Endothelial cell of umbilical vein (primary cell): ENCODE measurements at regions of chr6 and their contacts with region 1.

Region 1: DNA sequence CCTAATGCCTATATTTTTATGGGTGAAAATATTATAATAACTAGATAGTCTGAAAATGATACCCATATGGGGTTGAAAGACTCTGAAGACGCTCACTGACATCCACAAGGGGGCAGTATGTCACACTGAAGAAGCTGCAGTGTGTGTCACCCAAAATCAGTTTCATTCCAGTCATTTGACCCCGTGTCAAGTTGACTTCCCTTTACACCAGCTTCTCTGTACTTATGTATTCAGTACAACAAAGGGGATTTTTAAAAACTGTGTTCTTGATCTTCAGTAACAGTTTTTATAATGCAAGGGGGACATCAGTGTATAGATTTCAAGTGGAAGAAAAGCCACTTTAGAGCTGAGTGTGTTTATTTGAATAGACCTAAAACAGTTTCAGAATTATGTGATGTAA is 19.3 kb downstream of the FAXC start:
- DNase-seq: peak; percentile 57
- H3K4me3 ChIP-seq: no peak overlapping the region
- H3K27ac ChIP-seq: no peak overlapping the region
- H3K4me1 ChIP-seq: no peaks in the 10 kb centered on the region
- H3K27me3 ChIP-seq: peaks cover 0 to 2% of the 10 kb centered on the region in 2 experiments
- CTCF ChIP-seq: peak; percentile 74 to 81
- POLR2A ChIP-seq: no peak

Region 2: DNA sequence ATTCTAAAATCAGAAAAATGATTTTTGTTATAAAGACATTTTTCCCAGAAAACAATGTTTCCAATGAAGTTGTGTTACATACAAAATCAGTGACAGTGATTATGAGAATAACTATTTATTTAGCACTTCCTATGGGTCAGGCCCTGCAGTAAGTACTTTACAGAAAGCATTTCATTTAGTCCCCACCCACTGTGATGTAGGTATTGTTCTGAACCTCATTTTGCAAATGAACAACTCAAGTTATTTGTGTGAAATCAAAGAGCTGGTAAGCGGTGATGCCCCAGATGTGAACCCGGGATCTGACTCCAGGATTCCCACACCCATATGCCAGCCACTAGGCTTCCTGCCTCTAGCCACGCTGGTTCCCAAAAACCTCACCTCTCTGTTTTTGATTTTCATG is 11.6 kb before region 1 on chr6:
- CTCF ChIA-PET with region 1: interaction called, 41 read pairs
- POLR2A ChIA-PET with region 1: no interaction called
- dilution Hi-C with region 1: no loop called
- intact Hi-C with region 1: no loop called
- DNase-seq: no peak
- H3K4me3 ChIP-seq: no peak overlapping the region
- H3K27ac ChIP-seq: no peak overlapping the region
- H3K4me1 ChIP-seq: no peaks in the 10 kb centered on the region
- H3K27me3 ChIP-seq: no peaks in the 10 kb centered on the region
- CTCF ChIP-seq: no peak
- POLR2A ChIP-seq: no peak

Region 3: DNA sequence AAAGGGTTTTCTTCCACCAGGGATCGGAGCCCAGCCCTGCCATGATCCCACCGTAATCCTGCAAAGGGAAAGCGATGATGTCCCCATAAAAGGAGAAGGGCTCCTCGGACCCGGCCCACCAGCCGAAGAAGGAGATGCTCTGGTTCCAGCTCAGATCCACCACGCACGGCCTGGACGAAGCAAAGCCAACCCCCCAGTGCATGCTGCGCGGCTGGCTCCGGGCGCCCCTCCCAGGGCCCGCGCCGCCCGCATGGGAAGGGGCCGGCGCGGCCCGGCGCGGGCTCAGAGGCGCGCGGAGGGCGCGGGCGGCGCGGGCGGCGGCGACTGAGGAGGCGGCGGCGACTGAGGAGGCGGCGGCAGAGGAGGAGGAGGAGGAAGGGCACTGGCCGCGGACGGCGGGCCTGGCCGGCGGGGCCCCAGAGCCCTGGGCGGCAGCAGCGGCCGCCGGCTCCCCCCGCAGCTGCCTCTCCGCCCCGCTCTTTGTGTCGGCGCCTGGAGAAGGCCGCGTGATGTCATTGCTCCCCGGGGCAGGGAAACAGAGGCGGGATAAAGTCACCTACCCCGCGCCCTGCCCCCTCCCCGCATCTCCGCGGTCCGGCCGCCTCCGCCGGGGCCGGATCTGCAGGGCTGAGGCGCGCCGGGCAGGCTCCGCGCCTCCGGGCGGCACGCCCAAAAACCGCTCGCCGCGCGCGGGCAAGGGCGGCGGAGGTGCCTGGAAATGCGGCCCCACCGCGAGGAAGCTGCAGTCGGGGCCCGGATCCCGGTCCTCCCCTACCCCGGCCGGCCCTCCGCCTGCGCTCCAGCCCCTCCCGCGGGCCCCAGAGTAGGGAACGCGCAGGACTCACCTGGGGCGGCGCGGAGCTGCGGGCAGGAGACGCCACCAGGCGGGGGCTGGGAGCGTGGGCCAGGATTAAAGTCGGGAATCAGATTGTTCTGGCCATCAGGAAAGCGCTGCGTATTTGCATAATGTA is 19.3 kb after region 1 on chr6 and contains the start of gene FAXC:
- CTCF ChIA-PET with region 1: interaction called, 40 read pairs
- POLR2A ChIA-PET with region 1: no interaction called
- dilution Hi-C with region 1: no loop called
- intact Hi-C with region 1: no loop called
- DNase-seq: peak; percentile 25
- H3K4me3 ChIP-seq: peak within 1 kb of the TSS; percentile 57 to 60 (median 58)
- H3K27ac ChIP-seq: no peak within 1 kb of the TSS
- H3K4me1 ChIP-seq: peaks cover 15% of the 10 kb centered on the region
- H3K27me3 ChIP-seq: peaks cover 8 to 11% of the 10 kb centered on the region in 2 experiments
- CTCF ChIP-seq: no peak
- POLR2A ChIP-seq: no peak
- total RNA-seq, gene FAXC: 3.6 and 8.4 TPM in 2 replicates

Region 4: DNA sequence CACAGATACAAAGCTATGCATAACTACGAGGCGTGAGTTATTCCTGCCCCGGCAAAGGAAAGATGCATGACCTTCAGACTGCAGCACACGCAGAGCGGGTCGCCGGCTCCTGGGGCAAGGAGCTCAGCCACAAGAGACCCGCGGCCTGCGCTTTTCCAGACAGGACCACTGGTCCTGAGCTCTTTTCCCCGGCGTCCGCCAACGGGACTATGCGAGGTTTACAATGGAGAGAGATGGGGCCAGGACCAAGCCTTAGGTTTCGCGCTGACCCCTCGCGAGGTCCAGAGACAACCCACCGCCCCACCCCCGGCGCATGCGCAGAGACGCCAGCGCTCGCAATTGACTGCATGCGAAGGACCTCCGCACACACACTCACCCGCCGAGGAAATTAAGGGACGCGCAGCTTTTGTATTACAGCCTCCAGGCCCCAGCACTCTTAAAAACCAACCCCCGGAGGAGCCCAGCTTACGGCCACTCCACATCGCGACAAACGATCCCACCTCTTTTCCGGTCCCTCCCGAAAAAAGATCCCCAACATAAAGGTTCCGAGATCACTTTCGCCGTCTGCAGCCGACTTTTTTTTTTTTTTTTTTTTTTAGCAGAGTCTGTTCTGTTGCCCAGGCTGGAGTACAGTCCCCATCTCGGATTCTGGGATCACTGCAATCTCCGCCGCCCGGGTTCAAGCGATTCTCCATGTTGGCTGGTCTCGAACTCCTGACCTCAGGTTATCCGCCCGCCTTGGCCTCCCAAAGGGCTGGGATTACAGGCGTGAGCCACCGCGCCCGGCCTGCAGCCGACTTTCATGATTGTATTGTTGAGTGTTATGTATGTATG is 63.8 kb after region 1 on chr6 and contains the start of gene COQ3:
- CTCF ChIA-PET with region 1: interaction called, 30 read pairs
- POLR2A ChIA-PET with region 1: interaction called, 3 read pairs
- dilution Hi-C with region 1: no loop called
- intact Hi-C with region 1: loop called (anchors 1 kb)
- DNase-seq: peak; percentile 85
- H3K4me3 ChIP-seq: peak within 1 kb of the TSS; percentile 59 to 98 (median 84)
- H3K27ac ChIP-seq: peak within 1 kb of the TSS; percentile 81
- H3K4me1 ChIP-seq: peaks cover 5% of the 10 kb centered on the region
- H3K27me3 ChIP-seq: no peaks in the 10 kb centered on the region
- CTCF ChIP-seq: no peak
- POLR2A ChIP-seq: peak; percentile 73
- total RNA-seq, gene COQ3: 7.5 and 9.1 TPM in 2 replicates

Region 5: DNA sequence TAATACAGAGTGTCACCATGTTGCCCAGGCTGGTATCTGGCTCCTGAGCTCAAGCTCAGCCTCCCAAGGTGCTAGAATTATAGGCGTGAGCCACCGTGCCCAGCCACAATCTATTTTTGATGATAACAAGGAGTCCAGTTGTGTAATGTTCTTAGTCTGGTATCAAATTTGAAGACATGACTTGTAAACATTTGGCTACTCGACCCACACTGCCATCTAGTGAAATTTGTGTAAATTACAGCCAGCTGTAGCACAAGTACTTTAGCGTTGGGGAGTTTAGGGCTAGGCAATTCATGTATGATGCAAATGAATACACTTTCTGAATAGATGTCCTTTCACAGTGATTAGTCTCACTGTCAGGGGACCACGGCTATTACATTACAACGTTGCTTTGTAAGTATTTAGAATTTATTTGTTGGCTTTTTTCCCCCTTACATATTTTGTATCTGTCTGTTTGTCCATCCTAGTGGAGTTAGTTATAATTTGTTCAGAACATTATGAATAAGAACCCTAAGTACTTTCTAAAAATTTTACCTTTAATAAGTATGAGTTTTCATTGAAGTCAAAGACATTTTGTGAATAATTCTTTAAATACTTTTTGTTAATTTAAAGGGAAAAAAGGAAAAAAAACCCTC is 416.2 kb after region 1 on chr6:
- CTCF ChIA-PET with region 1: interaction called, 22 read pairs
- POLR2A ChIA-PET with region 1: no interaction called
- dilution Hi-C with region 1: no loop called
- intact Hi-C with region 1: loop called (anchors 1 kb)
- DNase-seq: peak; percentile 81
- H3K4me3 ChIP-seq: no peak overlapping the region
- H3K27ac ChIP-seq: no peak overlapping the region
- H3K4me1 ChIP-seq: no peaks in the 10 kb centered on the region
- H3K27me3 ChIP-seq: peaks cover 12 to 20% of the 10 kb centered on the region in 2 experiments
- CTCF ChIP-seq: peak; percentile 58 to 64
- POLR2A ChIP-seq: no peak